ENCODE measurements at regions of chr18 and their contacts with region 1.

Region 1: DNA sequence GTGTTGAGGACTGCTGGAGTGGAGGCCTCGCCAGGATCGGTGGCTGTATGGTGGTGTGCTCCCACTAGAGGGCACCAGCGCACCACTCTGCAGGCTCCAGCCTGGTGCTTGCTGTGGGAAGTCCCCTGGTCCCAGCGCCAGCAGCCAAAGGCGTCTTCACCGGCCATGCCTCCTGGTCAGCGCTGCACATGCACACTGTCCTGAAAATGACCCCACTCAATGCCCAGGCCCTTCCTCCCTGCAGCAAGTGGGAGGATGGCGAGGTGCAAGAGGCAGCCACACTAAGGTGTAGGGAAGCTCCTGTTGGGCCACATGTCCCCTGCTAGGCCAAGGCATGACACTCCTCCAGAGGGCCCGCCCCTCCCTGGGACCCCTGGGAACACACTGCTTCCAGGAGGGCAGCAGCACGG is 136.5 kb downstream of the CTIF start:
- DNase-seq: peak; percentile 96
- H3K4me3 ChIP-seq: no peak overlapping the region
- H3K27ac ChIP-seq: peak overlapping the region in 1 of 8 donors; percentile 17
- H3K4me1 ChIP-seq: peaks cover 4 to 59% (median 23%) of the 10 kb centered on the region in 6 donors
- H3K27me3 ChIP-seq: no peaks in the 10 kb centered on the region
- CTCF ChIP-seq: peak; percentile 85 to 96 (median 92)
- POLR2A ChIP-seq: no peak

Region 2: GRCh38 chr18:48073231-48073930 is 602.0 kb before region 1 on chr18:
- intact Hi-C with region 1: no loop called
- DNase-seq: peak; percentile 72
- H3K4me3 ChIP-seq: no peak overlapping the region
- H3K27ac ChIP-seq: peak overlapping the region; percentile 57 to 89 (median 78)
- H3K4me1 ChIP-seq: peaks cover 0 to 55% (median 12%) of the 10 kb centered on the region in 6 donors
- H3K27me3 ChIP-seq: no peaks in the 10 kb centered on the region
- CTCF ChIP-seq: no peak
- POLR2A ChIP-seq: no peak

Region 3: DNA sequence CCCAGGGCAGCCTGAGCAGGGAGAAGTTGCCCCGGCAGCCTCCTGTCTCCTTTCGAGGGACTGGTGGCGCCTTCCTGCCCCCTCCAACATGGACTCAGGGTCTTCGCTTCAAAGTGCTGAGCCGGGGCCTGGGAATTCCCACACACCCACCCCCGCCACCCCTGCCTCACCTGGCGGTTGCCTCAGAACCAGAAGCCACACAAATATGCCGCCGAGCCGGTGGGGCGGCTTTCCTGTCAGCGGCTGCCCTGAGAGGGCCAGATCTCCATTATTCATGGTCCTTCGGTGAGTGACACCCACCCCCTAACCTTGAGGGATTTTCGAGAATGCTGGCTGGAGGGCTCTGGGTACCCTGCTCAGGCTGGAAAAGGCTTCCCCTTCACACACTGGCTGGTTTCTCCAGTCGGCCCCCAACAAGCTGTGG is 203.7 kb after region 1 on chr18:
- intact Hi-C with region 1: no loop called
- DNase-seq: peak; percentile 61
- H3K4me3 ChIP-seq: no peak overlapping the region
- H3K27ac ChIP-seq: no peak overlapping the region
- H3K4me1 ChIP-seq: peaks cover 0 to 16% (median 6%) of the 10 kb centered on the region in 6 donors
- H3K27me3 ChIP-seq: no peaks in the 10 kb centered on the region
- CTCF ChIP-seq: no peak
- POLR2A ChIP-seq: no peak

Region 4: DNA sequence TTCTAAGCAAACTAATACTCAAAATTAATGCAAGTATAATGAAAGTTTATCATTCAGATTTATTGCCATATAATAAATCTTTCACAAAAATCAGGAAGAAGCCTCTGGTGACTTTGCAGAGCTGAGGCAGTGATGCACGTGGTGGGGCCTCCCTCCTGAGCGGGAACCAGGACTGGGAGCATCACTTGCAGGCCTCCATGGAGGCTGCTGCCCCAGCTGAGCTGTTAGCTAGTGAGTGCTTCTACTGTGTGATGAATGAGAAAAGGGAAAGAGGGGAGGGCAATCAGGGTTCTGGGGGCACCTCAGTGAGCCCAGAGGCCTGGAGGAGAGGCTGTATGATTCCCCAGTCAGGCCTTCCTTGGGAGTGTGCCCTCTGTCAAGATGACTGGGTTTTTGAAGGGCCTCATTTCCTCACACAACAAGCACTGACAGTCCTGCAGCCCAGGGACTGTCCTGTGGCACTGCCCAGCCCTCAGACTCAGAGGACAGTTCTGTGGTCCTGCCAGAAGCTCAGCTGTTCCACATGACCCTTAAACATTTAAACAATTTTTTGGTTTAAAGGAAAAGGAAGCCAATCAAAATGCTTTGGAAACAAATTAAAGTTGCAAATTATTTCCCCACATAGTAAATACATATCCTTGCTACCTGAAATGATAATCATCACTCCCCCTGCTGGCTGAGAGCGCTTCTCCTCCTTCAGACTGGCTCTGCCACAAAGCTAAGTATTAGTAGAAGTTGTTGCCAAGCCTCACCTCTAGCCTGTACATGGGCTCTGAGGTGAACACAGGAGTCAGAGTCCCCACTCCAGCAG is 366.3 kb after region 1 on chr18:
- intact Hi-C with region 1: loop called (anchors 10 kb)
- DNase-seq: no peak
- H3K4me3 ChIP-seq: no peak overlapping the region
- H3K27ac ChIP-seq: no peak overlapping the region
- H3K4me1 ChIP-seq: no peaks in the 10 kb centered on the region
- H3K27me3 ChIP-seq: no peaks in the 10 kb centered on the region
- CTCF ChIP-seq: peak in 10 of 11 experiments; percentile 36 to 69 (median 56)
- POLR2A ChIP-seq: no peak

Region 5: GRCh38 chr18:49178736-49179135 is 503.4 kb after region 1 on chr18:
- intact Hi-C with region 1: loop called (anchors 10 kb)
- DNase-seq: no peak
- H3K4me3 ChIP-seq: no peak overlapping the region
- H3K27ac ChIP-seq: no peak overlapping the region
- H3K4me1 ChIP-seq: peaks cover 0 to 47% (median 23%) of the 10 kb centered on the region in 6 donors
- H3K27me3 ChIP-seq: no peaks in the 10 kb centered on the region
- CTCF ChIP-seq: peak in 6 of 11 experiments; percentile 31 to 46 (median 43)
- POLR2A ChIP-seq: no peak

Region 6: GRCh38 chr18:49238433-49239042 is 563.2 kb after region 1 on chr18:
- intact Hi-C with region 1: loop called (anchors 10 kb)
- DNase-seq: no peak
- H3K4me3 ChIP-seq: no peak overlapping the region
- H3K27ac ChIP-seq: no peak overlapping the region
- H3K4me1 ChIP-seq: no peaks in the 10 kb centered on the region
- H3K27me3 ChIP-seq: no peaks in the 10 kb centered on the region
- CTCF ChIP-seq: peak in 9 of 11 experiments; percentile 4 to 42 (median 32)
- POLR2A ChIP-seq: no peak

Region 7: DNA sequence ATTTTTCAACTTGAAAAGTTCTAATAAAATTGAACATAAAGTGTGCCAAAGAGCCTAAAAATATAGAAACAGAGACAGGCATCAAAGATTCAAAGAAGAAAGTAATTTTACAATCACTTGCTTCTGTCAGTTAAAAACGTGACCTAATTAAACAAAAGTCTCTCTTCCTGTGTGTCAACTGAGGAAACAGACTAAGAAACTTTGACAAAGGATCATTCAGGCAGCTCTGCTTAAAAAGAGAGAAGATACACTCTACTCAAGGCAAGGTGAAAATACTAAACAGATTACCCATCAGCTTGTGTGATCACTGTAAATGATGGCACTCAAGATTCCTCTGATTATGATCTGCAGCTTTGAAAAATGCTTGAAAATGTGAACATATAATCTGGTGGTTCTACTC is 737.3 kb after region 1 on chr18:
- intact Hi-C with region 1: loop called (anchors 10 kb)
- DNase-seq: no peak
- H3K4me3 ChIP-seq: no peak overlapping the region
- H3K27ac ChIP-seq: peak overlapping the region in 2 of 8 donors; percentile 31 to 41
- H3K4me1 ChIP-seq: peaks cover 0 to 40% (median 9%) of the 10 kb centered on the region in 6 donors
- H3K27me3 ChIP-seq: no peaks in the 10 kb centered on the region
- CTCF ChIP-seq: no peak
- POLR2A ChIP-seq: no peak